Activated T-helper 1 cell treated with anti-CD3 and anti-CD28 coated beads, Interleukin-12 subunit alpha, Interleukin-12 subunit beta, Interleukin-2, Interleukin-4 antibody, amounts not matched to agents 30 ng/mL and 10 ng/mL and 1 ng/mL, durations not matched to agents 14 hours and 24 hours and 36 hours (primary cell): ENCODE measurements at regions of chr11 and their contacts with region 1.

Region 1: GRCh38 chr11:78645226-78646202 is 70.8 kb upstream of the NARS2 start:
- DNase-seq: peak; percentile 35
- H3K4me3 Mint-ChIP-seq: no peak overlapping the region
- H3K27ac Mint-ChIP-seq: peak overlapping the region; percentile 69
- H3K4me1 Mint-ChIP-seq: peaks cover 35% of the 10 kb centered on the region
- H3K27me3 Mint-ChIP-seq: no peaks in the 10 kb centered on the region

Region 2: GRCh38 chr11:78228467-78228866 is 417.0 kb before region 1 on chr11:
- intact Hi-C with region 1: loop called (anchors 1 kb)
- DNase-seq: peak; percentile 21
- H3K4me3 Mint-ChIP-seq: no peak overlapping the region
- H3K27ac Mint-ChIP-seq: no peak overlapping the region
- H3K4me1 Mint-ChIP-seq: peaks cover 75% of the 10 kb centered on the region
- H3K27me3 Mint-ChIP-seq: no peaks in the 10 kb centered on the region

Region 3: GRCh38 chr11:78339483-78339882 is 306.0 kb before region 1 on chr11:
- intact Hi-C with region 1: loop called (anchors 1 kb)
- DNase-seq: no peak
- H3K4me3 Mint-ChIP-seq: peak overlapping the region; percentile 31
- H3K27ac Mint-ChIP-seq: peak overlapping the region; percentile 94
- H3K4me1 Mint-ChIP-seq: peaks cover 86% of the 10 kb centered on the region
- H3K27me3 Mint-ChIP-seq: no peaks in the 10 kb centered on the region

Region 4: DNA sequence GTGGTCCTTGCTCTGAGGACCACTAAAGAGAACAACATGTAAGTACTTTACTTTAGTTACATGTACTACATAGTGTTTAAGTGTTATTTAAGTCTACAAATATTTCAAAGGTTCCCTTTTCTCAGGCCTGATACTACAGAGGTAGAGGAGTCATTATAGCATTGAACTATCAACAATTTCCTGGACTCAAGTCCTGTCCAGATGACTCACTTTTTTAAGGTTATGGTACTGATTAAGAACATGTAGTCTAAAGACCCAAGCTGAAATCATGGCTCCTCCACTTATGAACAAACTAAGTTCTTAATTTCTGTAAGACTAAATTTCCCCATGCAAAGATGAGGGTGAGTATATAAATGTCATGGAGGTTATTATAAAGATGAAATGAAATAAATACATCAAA is 145.5 kb before region 1 on chr11:
- intact Hi-C with region 1: no loop called
- DNase-seq: no peak
- H3K4me3 Mint-ChIP-seq: no peak overlapping the region
- H3K27ac Mint-ChIP-seq: no peak overlapping the region
- H3K4me1 Mint-ChIP-seq: peaks cover 26% of the 10 kb centered on the region
- H3K27me3 Mint-ChIP-seq: no peaks in the 10 kb centered on the region

Region 5: DNA sequence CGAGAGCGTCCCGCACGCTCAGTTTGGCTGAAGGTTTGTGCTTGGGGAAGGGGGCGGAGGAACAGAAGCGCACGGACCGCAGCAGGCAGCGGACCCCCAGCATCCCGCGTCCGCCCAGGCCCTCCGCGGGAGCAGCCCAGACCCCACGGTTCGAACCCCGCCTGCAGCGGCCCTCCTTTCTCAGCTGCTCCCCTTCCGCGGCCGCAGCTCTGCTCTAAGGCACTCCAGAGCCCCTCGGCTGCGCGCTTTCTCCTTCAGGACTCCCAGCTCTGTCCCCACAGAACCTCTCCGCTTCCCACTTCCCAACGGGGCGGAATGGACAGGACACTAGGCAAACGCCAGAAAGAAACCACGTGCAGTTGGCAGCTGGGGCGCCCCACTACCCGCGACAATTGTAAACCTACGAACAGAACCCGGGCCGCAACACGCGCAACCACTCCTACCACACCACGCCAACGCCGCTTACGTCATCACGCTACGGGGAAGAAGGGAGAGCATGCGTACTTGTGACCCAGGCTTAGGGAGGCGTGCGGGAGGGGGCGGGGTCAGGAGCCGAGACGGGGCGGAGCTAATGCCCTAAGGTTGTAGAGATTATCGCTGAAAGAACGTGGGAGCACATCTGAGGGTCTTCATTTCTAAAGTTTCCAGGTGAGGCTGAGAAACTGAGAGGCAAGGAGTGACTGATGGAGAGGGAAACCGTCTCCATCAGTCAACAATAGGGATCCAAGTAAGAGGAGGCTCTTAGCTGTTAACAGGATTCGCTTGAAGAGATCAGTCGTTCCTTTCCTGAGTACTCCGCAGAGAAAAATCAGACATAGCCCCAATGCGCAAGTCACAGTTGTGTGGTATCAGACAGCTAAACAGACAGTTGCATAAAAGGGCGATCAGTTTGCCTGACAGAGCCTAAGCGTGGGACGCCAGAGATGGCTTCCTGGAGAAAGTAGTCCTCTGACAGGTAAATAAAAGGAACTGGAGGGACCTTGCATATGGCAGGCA is 70.8 kb before region 1 on chr11 and contains the start of gene NARS2:
- intact Hi-C with region 1: loop called (anchors 1 kb)
- DNase-seq: peak; percentile 95
- H3K4me3 Mint-ChIP-seq: peak within 1 kb of the TSS; percentile 90
- H3K27ac Mint-ChIP-seq: peak within 1 kb of the TSS; percentile 86
- H3K4me1 Mint-ChIP-seq: peaks cover 40% of the 10 kb centered on the region
- H3K27me3 Mint-ChIP-seq: peaks cover 7% of the 10 kb centered on the region
- total RNA-seq, gene NARS2: 38.2 and 38.7 TPM in 2 replicates

Region 6: DNA sequence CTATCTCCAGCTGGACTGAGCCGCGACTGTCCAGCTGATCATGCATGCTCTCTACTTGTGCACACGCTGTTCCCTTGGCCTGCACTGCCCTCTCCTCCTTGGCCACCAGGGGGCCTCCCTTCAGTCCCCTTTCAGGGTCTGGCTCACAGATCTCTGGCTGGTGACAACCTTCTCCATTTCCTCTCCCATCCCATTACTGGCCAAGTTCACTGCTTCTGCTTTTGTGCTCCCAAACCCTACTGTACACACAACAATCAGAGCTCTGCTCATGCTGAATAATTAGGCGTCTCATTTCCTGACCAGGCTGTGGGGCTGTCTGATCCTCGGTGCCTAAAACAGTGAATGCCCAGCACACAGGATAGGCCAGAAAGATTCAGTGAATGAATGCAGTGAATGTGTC is 153.1 kb after region 1 on chr11:
- intact Hi-C with region 1: loop called (anchors 5 kb)
- DNase-seq: no peak
- H3K4me3 Mint-ChIP-seq: no peak overlapping the region
- H3K27ac Mint-ChIP-seq: no peak overlapping the region
- H3K4me1 Mint-ChIP-seq: no peaks in the 10 kb centered on the region
- H3K27me3 Mint-ChIP-seq: peaks cover 2% of the 10 kb centered on the region

Region 7: DNA sequence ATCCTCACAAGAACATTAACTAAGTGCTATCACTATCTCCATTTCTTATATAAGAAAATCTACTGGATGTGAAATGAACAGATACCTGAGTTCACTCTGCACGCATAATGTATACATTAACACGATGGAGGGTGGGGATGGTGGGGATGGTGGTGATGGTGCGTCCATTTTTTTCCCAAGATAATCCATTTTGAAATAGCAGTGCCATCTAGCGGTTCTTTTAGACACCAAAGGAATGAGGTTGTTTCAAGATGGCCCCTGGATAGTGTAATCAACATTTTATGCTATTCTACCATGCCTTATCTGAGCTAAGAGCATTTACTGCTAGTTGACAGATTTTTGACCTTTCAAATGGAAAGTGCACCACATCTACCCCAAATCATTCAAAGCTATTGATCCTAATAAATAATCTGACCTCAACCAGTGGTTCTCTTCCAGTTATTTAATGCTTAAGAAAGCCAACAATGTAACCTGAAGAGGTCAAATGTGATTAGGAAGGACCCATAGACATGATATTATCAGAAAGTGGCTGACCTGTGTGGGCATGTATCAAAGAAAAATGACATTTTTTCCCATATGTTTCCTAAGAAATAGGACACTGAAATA is 1510.0 kb after region 1 on chr11:
- intact Hi-C with region 1: loop called (anchors 10 kb)
- DNase-seq: no peak
- H3K4me3 Mint-ChIP-seq: no peak overlapping the region
- H3K27ac Mint-ChIP-seq: no peak overlapping the region
- H3K4me1 Mint-ChIP-seq: no peaks in the 10 kb centered on the region
- H3K27me3 Mint-ChIP-seq: no peaks in the 10 kb centered on the region